ENCODE measurements at regions of chr2 and their contacts with region 1.

Region 1: DNA sequence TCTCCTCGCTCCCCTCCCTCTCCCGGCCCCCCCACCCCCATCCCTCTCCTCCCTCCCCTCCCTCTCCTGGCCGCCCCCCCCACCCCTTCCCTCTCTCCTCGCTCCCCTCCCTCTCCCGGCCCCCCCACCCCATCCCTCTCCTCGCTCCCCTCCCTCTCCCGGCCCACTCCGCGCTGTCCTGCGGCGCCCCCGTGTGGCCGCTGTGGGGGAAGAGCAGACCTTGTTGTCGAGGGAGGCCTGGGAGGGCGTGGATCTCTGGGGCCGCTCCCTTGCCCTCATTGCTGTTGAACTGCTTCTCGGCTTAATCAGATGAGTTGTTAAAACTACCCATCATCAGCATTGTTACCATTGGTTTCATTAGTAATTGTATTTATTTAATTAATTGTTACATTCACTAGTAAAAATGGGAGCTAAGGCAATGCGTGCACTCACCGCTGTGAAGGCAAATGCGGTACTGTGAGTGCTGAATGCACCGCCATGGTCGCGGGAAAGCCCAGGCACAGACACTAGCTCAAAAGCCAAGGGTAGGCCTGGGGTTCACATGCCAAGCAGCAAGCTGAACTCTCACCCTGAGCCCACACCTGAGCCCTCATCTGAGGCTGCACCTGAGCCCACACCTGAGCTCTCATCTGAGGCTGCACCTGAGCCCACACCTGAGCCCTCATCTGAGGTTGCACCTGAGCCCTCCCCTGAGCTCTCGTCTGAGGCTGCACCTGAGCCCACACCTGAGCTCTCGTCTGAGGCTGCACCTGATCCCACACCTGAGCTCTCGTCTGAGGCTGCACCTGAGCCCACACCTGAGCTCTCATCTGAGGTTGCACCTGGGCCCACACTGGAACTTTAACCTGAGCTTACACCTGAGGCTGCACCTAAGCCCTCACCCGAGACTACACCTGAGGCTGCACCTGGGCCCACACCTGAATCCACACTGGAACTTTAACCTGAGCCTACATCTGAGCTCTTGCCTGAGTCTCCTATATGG is 8.8 kb downstream of the RTP5 start:
- DNase-seq: peak in 1 of 2 donors; percentile 59
- H3K4me3 ChIP-seq: no peak overlapping the region
- H3K27ac ChIP-seq: no peak overlapping the region
- H3K4me1 ChIP-seq: peaks cover 0 to 26% (median 13%) of the 10 kb centered on the region in 4 donors
- H3K27me3 ChIP-seq: peaks cover 0 to 5% of the 10 kb centered on the region in 2 donors
- CTCF ChIP-seq: peak; percentile 36 to 62

Region 2: GRCh38 chr2:240851078-240851991 is 1026.9 kb before region 1 on chr2:
- intact Hi-C with region 1: loop called (anchors 5 kb)
- DNase-seq: peak; percentile 84 to 86
- H3K4me3 ChIP-seq: no peak overlapping the region
- H3K27ac ChIP-seq: no peak overlapping the region
- H3K4me1 ChIP-seq: no peaks in the 10 kb centered on the region
- H3K27me3 ChIP-seq: peaks cover 0 to 32% of the 10 kb centered on the region in 2 donors
- CTCF ChIP-seq: peak; percentile 90 to 95

Region 3: DNA sequence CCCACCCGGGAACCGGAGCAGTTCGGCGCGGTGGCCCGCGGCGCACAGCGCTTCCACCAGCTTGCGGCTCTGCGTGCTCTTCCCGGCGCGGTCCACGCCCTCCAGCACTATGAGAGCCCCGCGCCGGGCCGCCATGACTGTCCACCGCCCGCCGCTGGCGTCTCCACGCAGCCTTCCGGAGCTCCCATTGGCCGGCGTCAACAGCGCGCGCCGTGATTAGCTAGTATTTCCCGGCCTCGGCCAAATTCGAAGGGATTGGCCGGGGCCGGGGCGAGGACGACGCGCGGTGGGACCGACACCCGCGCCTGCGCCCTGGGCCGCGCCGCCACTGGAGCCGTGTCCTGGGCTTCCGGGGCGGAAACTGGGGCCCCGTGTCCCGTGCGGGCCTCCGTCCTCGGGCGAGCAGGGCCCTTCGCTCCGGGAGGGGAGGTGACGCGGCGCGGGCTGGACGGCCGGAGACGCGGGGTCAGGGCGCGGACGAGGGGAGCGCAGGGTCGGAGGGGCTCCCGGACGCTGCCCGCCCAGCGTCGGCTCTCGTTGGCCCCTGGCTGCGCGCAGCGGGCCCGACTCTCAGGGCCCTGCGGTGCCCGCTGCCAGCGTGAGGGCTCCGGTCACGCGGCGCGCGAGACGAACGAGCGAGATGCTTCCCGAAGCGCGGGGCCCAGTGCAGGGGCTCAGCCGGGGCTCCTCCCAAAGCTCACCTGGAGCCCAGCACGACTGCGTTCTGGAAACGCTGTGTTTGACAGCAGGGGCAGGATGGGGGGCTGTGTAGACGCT is 191.4 kb before region 1 on chr2 and contains the start of gene DTYMK:
- intact Hi-C with region 1: loop called (anchors 10 kb)
- DNase-seq: peak; percentile 96 to 98
- H3K4me3 ChIP-seq: peak within 1 kb of the TSS; percentile 74 to 89
- H3K27ac ChIP-seq: peak within 1 kb of the TSS; percentile 87 to 95
- H3K4me1 ChIP-seq: peaks cover 0 to 33% (median 27%) of the 10 kb centered on the region in 4 donors
- H3K27me3 ChIP-seq: no peaks in the 10 kb centered on the region
- CTCF ChIP-seq: no peak

Region 4: DNA sequence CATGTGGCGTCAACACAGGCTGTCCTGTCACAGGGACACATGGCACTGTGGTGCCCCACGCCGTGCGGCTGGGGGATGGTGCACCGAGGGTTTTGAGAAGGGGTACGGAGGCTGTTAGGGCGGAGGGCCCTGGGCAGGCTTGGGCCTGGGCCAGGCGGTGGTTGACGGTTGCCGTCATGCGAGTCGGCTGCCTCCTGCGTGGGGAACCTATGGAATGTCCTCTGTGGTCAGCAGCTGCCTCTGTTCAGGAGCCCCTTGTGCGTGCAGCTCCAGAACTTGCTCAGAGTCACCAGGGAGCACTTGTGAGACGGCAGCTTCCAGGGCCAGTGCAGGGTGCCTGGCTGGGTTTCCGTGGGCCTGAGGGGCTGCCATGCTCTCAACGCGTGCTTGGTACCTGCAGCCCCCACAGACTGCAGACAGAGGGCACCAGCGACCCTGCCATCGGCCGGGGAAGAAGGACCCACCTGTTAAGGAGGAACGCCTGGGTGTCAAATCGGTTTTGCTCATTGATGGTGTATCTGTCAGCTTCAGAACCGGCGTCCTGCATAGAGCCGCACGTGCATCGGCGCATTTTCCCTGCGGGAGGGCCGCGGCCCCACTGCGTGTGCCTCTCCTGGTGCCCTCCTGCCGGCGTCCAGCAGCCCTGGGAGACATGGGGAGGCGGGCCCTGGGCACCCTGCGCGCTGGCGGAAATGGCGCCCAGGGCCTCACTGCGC is 153.9 kb before region 1 on chr2:
- intact Hi-C with region 1: no loop called
- DNase-seq: no peak
- H3K4me3 ChIP-seq: no peak overlapping the region
- H3K27ac ChIP-seq: no peak overlapping the region
- H3K4me1 ChIP-seq: no peaks in the 10 kb centered on the region
- H3K27me3 ChIP-seq: no peaks in the 10 kb centered on the region
- CTCF ChIP-seq: peak in 1 of 2 experiments; percentile 6

Measured in tibial artery (tissue), 4 donors.